ENCODE measurements at regions of chr12 and their contacts with region 1.

Region 1: GRCh38 chr12:4763549-4763948 is 43.3 kb downstream of the GALNT8 start:
- DNase-seq: no peak
- ATAC-seq: no peak
- H3K4me3 ChIP-seq: no peak overlapping the region
- H3K27ac ChIP-seq: no peak overlapping the region
- H3K4me1 ChIP-seq: no peaks in the 10 kb centered on the region
- H3K27me3 ChIP-seq: peaks cover 15% of the 10 kb centered on the region
- CTCF ChIP-seq: no peak

Region 2: GRCh38 chr12:4471256-4471655 is 292.3 kb before region 1 on chr12:
- CTCF ChIA-PET with region 1: interaction called, 11 read pairs
- POLR2A ChIA-PET with region 1: no interaction called
- intact Hi-C with region 1: no loop called
- DNase-seq: no peak
- ATAC-seq: no peak
- H3K4me3 ChIP-seq: no peak overlapping the region
- H3K27ac ChIP-seq: no peak overlapping the region
- H3K4me1 ChIP-seq: no peaks in the 10 kb centered on the region
- H3K27me3 ChIP-seq: peaks cover 45% of the 10 kb centered on the region
- CTCF ChIP-seq: no peak

Region 3: DNA sequence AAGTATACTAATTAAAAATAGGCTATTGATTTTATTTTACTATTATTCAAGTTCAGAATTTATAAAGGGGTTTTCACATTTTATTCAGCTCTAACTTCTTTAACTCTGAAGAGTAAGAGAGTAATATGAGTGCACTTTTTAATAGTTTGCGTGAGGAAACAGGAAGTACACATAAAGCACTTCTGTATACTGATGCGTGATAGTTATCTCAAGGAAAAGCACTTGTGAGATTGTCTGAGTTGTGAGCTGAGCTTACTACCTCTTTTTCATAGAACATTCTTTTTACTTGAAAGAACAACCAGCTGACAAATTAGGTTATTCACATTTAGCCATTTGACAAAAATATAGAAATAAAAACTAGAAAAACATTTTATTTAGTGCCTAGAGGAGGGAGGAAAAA is 222.9 kb before region 1 on chr12:
- CTCF ChIA-PET with region 1: no interaction called
- POLR2A ChIA-PET with region 1: no interaction called
- intact Hi-C with region 1: loop called (anchors 5 kb)
- DNase-seq: no peak
- ATAC-seq: no peak
- H3K4me3 ChIP-seq: peak overlapping the region; percentile 84; the same call in 1 of the 2 replicates
- H3K27ac ChIP-seq: no peak overlapping the region
- H3K4me1 ChIP-seq: peaks cover 19% of the 10 kb centered on the region
- H3K27me3 ChIP-seq: no peaks in the 10 kb centered on the region
- CTCF ChIP-seq: no peak

Region 4: GRCh38 chr12:4604684-4605193 is 158.8 kb before region 1 on chr12:
- CTCF ChIA-PET with region 1: no interaction called
- POLR2A ChIA-PET with region 1: no interaction called
- intact Hi-C with region 1: loop called (anchors 2 kb)
- DNase-seq: peak; percentile 83
- ATAC-seq: peak; percentile 97
- H3K4me3 ChIP-seq: peak overlapping the region; percentile 89
- H3K27ac ChIP-seq: no peak overlapping the region
- H3K4me1 ChIP-seq: peaks cover 3% of the 10 kb centered on the region; the same call in 1 of the 2 replicates
- H3K27me3 ChIP-seq: peaks cover 20% of the 10 kb centered on the region
- CTCF ChIP-seq: peak; percentile 85